Aorta (tissue), 5 donors: ENCODE measurements at regions of chr15 and their contacts with region 1.

Region 1: DNA sequence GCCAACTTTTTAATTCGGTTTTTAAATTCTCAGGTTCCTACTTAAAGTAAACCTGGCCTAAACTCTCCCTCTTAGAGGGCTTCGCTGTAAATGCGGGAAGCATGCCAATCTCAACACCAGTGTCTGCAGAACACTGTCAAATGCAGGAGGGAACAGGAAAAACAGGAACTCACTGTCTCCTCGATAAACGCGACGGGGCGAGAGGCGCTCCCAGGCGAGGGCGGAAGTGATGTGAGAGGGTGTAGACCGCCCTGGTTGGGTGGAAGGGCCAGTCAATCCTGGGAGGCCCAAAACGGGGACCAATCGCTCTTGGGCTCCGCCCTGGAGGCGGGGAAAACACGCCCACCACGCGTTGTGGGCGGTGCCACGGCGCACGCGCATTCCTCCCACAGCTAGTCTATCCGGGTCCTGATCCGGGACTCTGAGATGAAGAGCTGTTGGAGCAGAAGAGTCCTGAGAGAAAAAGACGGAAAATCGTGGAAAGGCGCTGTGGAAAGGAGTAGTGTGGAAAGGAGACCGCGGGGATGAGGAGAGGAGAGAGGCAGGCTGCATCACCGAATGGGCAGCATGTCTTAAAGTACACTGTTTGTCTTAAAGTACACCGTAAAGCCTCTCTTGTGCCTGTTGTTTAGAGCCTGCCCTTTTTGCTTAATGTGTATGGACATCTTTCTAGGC is 27.1 kb downstream of the SLC28A2 start:
- DNase-seq: peak; percentile 98 to 99
- ATAC-seq: peak; percentile 100
- H3K4me3 ChIP-seq: peak overlapping the region; percentile 45 to 53
- H3K27ac ChIP-seq: peak overlapping the region in 1 of 2 donors; percentile 14
- H3K4me1 ChIP-seq: peaks cover 0 to 5% of the 10 kb centered on the region in 2 donors
- H3K27me3 ChIP-seq: no peaks in the 10 kb centered on the region

Region 2: DNA sequence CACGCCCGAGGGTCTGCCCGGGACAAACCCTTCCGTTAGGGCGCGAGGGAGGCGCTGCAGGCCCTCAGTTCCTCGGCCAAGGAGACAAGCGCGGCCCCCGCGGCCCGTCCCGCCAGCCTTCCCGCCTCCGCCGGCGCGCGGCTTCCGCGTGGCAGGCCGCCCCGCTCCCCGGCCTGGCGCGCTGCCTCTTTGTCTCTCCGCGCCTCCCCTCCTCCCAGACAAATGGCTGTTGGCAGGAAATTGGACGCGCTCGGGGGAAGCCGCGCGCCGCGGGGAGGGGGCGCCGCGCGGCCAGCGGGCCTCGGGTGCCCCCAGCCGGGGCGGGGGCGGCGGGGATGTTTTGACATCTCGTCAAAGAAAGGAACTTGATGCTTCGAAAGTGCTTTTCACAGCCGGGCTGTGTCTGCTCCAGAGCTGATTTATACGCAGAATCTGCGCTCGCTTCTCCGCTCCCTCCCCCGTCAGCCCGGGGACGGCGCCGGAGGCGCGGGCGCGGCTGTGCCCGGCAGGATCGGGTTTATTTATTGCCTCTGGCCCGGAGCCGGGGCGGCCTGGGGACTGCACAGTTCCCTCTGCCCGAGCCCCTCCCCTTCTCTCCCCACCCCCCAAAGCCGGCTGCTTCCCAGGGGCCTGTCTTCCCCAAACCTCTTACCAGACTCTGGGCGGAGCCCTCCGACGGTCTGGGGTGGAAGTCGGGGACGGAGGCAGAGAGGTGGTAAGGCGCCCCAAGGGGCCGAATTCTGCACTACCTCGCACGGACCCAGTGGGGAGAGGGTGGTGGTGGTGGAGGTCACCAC is 112.1 kb before region 1 on chr15:
- intact Hi-C with region 1: loop called in 1 of 2 experiments (anchors 5 kb)
- DNase-seq: peak; percentile 94
- ATAC-seq: peak; percentile 81
- H3K4me3 ChIP-seq: peak overlapping the region; percentile 69 to 83
- H3K27ac ChIP-seq: peak overlapping the region; percentile 88 to 89
- H3K4me1 ChIP-seq: no peaks in the 10 kb centered on the region
- H3K27me3 ChIP-seq: no peaks in the 10 kb centered on the region

Region 3: GRCh38 chr15:45205192-45205591 is 74.0 kb before region 1 on chr15:
- intact Hi-C with region 1: loop called in 1 of 2 experiments (anchors 2 kb)
- DNase-seq: no peak
- ATAC-seq: no peak
- H3K4me3 ChIP-seq: no peak overlapping the region
- H3K27ac ChIP-seq: no peak overlapping the region
- H3K4me1 ChIP-seq: no peaks in the 10 kb centered on the region
- H3K27me3 ChIP-seq: no peaks in the 10 kb centered on the region